Activated CD4-positive, alpha-beta T cell treated with anti-CD3 and anti-CD28 coated beads, Interleukin-2, amount 10 ng/mL, durations not matched to agents 24 days and 14 days (primary cell): ENCODE measurements at regions of chr15 and their contacts with region 1.

Region 1: DNA sequence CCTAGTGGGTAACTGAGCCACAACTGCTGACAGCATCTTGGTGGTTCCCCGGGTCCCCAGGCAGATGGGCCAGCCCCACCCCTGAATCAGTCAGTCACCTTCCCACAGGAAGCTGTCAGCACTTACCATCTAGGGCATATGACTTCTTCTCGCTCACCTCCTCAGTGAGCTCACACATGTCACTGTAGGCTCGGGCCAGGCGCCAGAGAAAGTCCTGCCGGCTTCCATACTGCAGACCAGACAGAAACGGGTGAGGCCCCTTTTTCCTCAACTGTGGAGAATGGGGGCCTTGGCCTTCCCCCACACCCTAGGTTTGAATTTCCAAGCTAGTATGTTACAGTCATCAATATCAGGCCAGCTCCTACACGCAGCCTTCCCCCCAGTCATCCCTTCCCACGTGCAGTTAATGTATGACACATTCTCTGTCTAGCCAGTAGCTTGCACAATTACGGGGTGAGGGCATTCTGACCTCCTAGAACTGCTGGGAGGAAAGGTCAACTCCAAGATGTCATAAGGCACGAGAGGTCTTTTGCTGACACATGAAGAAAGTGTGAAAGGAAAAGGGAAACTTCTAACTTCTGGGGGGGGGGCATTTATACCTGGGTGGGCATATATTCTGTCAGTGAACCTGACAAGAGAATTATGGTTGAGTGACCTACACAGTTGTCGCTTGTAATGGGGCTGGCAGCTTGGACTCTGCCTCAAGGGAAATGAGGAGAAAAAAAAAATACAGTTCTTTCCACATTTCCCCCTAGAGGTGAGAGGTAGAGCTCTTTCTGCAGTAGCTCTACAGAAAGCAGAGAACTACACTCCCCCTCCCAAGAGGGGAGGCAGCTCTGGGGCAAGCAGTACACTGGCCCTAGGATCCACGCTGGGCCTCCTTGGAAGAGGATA is 10.9 kb downstream of the RMDN3 start:
- DNase-seq: peak; percentile 91
- H3K4me3 Mint-ChIP-seq: peak overlapping the region; percentile 70
- H3K27ac Mint-ChIP-seq: peak overlapping the region; percentile 94
- H3K4me1 Mint-ChIP-seq: peaks cover 35% of the 10 kb centered on the region
- H3K27me3 Mint-ChIP-seq: no peaks in the 10 kb centered on the region

Region 2: DNA sequence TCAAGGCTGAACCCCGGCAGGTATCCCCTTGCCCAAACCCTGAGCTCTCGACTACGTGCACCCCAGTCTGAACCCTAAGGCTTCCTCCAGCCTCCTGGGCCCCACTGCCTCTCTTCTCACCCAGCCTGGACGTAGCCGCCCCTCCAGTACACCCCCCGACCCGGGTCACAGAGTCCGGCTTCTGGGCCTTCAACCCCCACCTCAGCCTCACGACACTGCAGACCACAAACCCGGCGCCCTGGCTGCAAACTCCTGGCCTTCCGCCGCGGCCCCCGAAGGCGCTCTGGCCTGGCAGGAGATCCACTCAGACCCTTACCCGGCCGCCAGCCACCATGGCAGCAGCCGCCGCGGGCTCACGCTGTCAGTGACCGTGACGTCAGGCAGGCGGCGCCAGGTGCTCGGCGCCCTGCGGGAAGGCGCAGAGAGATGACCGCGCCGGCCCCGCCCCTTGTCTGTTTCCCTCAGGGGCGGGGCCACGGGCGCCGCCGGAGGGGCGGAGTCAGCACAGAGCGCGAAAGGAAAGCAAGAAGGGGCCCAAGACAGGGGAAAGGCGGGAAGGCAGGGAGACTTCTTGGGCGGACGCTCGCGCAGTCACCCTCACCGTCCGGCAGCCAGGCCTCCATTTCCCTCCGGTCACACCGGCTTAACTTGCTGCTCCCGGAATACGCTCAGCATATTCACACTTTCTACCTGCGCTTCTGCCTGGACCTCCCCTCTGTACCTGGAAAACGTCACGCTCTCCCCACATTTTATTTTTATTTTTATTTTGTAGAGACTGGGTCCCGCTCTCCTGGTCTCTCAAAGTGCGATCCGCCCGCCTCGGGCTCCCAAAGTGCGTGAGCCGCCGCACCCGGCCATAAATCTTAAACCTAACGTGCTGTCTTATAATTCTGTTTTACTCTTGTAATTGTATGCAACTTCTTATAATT is 11.0 kb after region 1 on chr15 and contains the start of gene RMDN3:
- intact Hi-C with region 1: loop called (anchors 1 kb)
- DNase-seq: peak; percentile 99
- H3K4me3 Mint-ChIP-seq: peak within 1 kb of the TSS; percentile 98
- H3K27ac Mint-ChIP-seq: peak within 1 kb of the TSS; percentile 98
- H3K4me1 Mint-ChIP-seq: peaks cover 38% of the 10 kb centered on the region
- H3K27me3 Mint-ChIP-seq: no peaks in the 10 kb centered on the region
- total RNA-seq, gene RMDN3: 36.1 and 38.9 TPM in 2 replicates

Region 3: DNA sequence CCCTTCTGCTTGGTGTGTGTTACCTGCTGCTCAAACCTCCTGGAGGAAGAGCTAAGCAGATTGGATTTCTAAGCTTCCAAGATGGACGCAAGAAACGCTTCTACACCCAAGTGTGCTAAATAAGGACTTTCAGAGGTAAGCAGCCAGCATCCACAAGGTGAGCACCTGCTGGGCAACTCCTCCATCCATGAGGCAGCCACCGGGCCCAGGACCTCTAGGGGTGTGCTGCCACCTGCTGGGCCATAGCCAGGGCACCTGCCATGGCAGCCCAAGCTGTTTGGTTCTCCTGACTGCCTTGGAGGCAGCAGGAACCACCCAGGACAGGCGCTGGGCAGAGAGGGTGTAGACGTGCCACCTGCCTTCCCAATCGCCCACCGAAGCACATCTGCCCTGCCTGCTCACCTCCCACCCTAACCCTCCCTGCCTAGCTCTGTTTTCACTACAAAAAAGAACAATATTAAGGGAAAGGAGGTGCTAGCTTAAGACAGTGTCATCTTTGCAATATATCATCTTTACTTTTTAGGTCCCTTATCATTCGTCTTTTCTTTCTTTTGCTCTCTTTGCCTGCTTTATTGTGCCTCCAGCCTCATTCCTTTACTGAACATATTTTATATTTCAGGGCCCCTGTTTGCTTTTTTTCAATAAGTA is 38.5 kb after region 1 on chr15:
- intact Hi-C with region 1: loop called (anchors 1 kb)
- DNase-seq: peak; percentile 94
- H3K4me3 Mint-ChIP-seq: no peak overlapping the region
- H3K27ac Mint-ChIP-seq: no peak overlapping the region
- H3K4me1 Mint-ChIP-seq: peaks cover 19% of the 10 kb centered on the region
- H3K27me3 Mint-ChIP-seq: no peaks in the 10 kb centered on the region

Region 4: DNA sequence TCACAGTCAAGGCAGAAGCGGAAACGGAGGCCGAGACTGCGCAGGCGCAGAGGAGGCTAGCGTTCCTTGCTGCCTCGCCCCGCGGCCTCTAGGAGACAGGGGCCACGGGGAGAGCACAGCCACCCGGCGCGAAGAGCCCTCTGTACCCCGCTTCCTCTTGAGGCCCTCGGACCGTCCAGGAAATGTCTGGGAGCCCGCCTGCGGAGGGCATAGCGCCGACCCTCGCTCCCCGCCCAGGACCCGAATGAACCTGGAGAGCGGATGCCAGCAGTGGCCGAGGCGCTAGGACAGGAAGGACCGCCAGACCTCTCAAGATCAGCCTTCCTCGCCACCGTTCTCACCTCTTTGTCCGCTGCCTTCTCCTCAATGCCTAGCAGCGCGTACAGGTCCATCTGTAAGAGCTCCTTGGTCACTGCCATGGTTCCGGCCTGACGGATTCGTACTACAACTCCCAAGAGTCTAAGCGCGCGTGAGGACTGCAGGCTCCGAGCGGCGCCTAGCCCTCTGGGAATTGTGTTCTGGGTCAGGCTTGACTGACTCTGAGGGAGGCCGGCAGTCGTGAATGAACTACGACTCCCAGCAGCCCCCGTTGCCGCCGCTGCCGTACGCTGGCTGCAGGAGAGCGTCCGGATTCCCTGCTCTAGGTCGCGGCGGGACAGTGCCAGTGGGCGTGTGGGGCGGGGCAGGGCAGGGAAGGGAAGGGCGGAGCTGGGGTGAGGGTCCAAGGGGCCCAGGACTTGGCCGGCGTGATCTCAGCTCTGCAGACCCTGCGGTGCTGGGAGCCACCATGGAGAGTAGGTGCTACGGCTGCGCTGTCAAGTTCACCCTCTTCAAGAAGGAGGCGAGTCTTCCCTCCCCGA is 63.1 kb after region 1 on chr15 and contains the starts of genes DNAJC17 and ZFYVE19:
- intact Hi-C with region 1: no loop called
- DNase-seq: peak; percentile 98
- H3K4me3 Mint-ChIP-seq: peak within 1 kb of the TSS; percentile 93
- H3K27ac Mint-ChIP-seq: peak within 1 kb of the TSS; percentile 96
- H3K4me1 Mint-ChIP-seq: peaks cover 13% of the 10 kb centered on the region
- H3K27me3 Mint-ChIP-seq: no peaks in the 10 kb centered on the region
- total RNA-seq, gene DNAJC17: 53.8 and 54.3 TPM in 2 replicates
- total RNA-seq, gene ZFYVE19: 35.6 and 37.6 TPM in 2 replicates